GM10248 (cell line): ENCODE measurements at regions of chr19 and their contacts with region 1.

Region 1: DNA sequence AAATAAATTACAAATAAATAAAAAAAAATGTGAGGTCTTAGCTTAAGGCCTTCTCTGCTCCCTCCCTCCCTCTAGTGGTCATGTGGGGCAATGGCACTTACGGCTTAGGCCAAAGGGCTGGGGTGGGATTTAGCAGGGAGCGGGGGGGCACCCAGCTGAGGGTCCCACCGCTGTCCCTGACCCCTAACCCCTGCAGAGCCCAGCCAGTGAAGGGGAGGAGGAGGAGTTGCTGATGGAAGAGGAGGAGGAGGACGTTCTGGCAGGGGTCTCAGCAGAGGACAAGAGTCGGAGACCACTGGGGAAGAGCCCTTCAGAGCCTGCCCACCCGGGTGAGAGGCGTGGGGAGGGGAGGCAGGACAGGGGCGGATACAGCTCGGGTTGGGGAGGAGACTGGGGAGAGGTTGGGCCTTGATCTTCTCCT is 9.3 kb downstream of the MPND start:
- DNase-seq: peak; percentile 77
- CTCF ChIP-seq: peak; percentile 69

Region 2: DNA sequence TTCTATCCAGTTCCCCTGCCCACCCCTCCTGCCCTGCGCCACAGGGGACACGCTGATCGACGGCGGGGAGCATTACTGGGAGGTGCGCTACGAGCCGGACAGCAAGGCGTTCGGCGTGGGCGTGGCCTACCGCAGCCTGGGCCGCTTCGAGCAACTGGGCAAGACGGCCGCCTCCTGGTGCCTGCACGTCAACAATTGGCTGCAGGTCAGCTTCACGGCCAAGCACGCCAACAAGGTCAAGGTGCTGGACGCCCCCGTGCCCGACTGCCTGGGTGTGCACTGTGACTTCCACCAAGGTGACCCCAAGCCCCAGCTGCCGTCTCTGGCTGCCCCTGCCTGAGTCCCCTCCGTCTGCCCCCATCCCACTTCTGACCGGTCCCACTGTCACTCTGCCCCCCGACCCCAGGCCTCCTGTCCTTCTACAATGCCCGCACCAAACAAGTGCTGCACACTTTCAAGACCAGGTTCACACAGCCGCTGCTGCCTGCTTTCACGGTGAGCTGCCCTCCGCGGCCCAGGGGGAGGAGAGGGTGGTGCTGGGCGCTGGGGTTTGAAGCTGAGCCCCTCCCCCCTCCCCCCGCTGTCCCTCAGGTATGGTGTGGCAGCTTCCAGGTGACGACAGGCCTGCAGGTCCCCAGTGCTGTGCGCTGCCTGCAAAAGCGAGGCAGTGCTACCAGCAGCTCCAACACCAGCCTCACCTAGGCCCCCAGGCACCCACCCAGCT is 29.6 kb before region 1 on chr19:
- CTCF ChIA-PET with region 1: interaction called, 28 read pairs
- POLR2A ChIA-PET with region 1: no interaction called
- DNase-seq: no peak
- CTCF ChIP-seq: no peak

Region 3: DNA sequence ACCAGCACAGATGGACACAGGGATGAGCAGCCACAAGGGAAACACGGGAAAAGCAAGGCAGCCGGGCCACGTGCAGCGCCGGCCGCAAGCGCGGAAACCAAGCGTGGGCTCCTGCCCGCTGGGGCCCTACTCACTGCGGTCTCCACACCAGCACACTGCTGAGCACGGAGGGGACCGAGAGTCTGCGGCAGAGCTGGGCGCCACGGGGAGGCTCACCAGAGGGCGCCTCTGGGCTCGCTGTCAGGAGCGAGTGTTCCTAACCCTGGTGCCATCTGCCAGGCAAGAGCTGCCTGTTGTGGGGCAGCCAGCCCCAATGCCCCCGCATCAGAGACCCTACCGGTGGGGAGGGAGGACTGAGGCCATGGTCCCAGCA is 17.2 kb after region 1 on chr19:
- CTCF ChIA-PET with region 1: interaction called, 85 read pairs
- POLR2A ChIA-PET with region 1: no interaction called
- DNase-seq: peak; percentile 71
- CTCF ChIP-seq: peak; percentile 79

Region 4: GRCh38 chr19:4375164-4376027 is 22.7 kb after region 1 on chr19:
- CTCF ChIA-PET with region 1: interaction called, 85 read pairs
- POLR2A ChIA-PET with region 1: no interaction called
- DNase-seq: peak; percentile 59
- CTCF ChIP-seq: peak; percentile 35

Region 5: DNA sequence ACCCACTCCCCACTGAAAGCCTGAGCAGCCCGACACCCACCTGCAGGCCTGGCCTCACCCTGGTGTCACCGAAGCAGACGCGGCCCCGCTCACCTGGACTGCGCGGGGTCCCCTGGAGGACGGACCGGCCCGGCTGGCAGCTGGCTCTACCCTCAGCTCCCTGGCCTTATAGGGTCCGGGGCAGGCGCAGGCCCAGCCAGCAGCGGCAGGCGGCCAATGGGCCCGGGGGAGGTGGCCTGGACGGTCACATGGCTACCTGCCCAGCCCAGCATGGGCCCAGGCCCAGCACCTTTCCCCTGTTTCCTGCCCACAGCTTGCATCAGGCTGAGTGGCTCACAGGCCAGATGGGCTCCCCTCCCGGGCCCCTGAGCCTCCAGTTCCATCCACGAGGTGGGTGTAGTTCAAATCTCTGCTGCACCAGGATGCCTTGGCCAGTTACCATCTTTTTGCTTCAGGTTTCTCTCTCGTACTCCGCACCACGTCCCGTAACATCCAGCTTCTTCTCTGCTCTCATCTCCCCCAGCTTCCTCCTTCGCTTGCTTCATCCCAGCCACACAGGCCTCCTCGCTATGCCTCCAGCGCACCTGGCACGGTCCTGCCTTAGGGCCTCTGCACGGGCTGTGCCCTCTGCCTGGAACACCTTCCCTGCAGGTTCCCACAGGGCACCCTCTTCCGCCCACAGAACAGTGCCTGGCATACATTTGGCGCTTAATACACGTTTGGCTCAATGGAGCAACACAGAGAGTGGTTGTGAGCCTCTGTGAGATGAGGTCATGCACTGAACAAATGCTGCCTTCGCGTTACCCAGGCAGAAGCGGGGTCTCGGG is 165.8 kb after region 1 on chr19 and contains the start of gene PLIN4:
- CTCF ChIA-PET with region 1: no interaction called
- POLR2A ChIA-PET with region 1: no interaction called
- DNase-seq: no peak
- CTCF ChIP-seq: no peak